ENCODE measurements at regions of chr15 and their contacts with region 1.

Region 1: GRCh38 chr15:78131295-78132061 is at the start of gene CIB2:
- DNase-seq: peak; percentile 88
- ATAC-seq: peak; percentile 96
- H3K4me3 Mint-ChIP-seq: peak within 1 kb of the TSS; percentile 84
- H3K27ac Mint-ChIP-seq: peak within 1 kb of the TSS; percentile 66
- H3K4me1 Mint-ChIP-seq: peaks cover 16% of the 10 kb centered on the region
- H3K27me3 Mint-ChIP-seq: no peaks in the 10 kb centered on the region
- CTCF ChIP-seq: no peak
- total RNA-seq, gene CIB2: 3.5 and 3.7 TPM in 2 replicates

Region 2: DNA sequence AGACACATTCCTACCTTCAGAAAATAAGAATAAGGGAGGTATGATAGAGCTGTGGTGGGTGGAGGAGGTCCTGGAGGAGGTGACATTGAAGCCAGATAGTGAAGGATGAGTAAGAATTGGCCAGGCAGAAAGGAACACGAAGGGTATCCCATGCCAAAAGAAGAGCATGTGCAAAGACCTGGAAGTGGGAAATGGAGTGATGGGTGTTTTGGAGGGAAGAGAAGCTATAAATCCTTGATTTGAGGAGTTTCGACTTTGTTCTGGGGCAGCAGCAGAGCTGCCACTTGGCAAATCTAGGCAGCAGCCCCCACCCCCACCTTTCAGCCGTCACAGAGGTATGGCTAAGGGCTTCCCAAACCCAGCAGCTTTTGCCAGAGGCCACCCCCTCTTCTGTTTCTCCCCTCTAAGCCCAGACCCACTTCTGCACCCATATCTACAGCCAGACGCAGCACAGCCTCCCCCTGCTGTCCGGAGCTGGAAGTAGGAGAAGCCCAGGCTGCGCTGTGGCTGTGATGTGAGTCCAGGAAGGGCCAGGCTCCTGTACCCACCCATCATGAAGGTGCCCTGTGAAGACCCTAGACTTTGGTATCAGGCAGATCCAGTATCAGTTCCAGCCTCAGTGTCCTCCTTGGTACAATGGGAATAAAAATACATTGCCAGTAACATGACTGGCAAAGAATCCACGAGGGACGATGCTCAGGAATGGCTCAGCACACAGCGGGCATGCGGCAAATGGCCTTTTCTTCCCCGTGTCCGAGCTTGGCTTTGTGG is 310.1 kb before region 1 on chr15:
- CTCF ChIA-PET with region 1: no interaction called
- POLR2A ChIA-PET with region 1: no interaction called
- intact Hi-C with region 1: no loop called
- DNase-seq: no peak
- ATAC-seq: no peak
- H3K4me3 Mint-ChIP-seq: no peak overlapping the region
- H3K27ac Mint-ChIP-seq: no peak overlapping the region
- H3K4me1 Mint-ChIP-seq: peaks cover 11% of the 10 kb centered on the region
- H3K27me3 Mint-ChIP-seq: peaks cover 53% of the 10 kb centered on the region
- CTCF ChIP-seq: no peak

Region 3: GRCh38 chr15:78101463-78102139 is 29.9 kb before region 1 on chr15:
- CTCF ChIA-PET with region 1: no interaction called
- POLR2A ChIA-PET with region 1: no interaction called
- intact Hi-C with region 1: no loop called
- DNase-seq: no peak
- ATAC-seq: no peak
- H3K4me3 Mint-ChIP-seq: no peak overlapping the region
- H3K27ac Mint-ChIP-seq: no peak overlapping the region
- H3K4me1 Mint-ChIP-seq: no peaks in the 10 kb centered on the region
- H3K27me3 Mint-ChIP-seq: no peaks in the 10 kb centered on the region
- CTCF ChIP-seq: no peak

Region 4: DNA sequence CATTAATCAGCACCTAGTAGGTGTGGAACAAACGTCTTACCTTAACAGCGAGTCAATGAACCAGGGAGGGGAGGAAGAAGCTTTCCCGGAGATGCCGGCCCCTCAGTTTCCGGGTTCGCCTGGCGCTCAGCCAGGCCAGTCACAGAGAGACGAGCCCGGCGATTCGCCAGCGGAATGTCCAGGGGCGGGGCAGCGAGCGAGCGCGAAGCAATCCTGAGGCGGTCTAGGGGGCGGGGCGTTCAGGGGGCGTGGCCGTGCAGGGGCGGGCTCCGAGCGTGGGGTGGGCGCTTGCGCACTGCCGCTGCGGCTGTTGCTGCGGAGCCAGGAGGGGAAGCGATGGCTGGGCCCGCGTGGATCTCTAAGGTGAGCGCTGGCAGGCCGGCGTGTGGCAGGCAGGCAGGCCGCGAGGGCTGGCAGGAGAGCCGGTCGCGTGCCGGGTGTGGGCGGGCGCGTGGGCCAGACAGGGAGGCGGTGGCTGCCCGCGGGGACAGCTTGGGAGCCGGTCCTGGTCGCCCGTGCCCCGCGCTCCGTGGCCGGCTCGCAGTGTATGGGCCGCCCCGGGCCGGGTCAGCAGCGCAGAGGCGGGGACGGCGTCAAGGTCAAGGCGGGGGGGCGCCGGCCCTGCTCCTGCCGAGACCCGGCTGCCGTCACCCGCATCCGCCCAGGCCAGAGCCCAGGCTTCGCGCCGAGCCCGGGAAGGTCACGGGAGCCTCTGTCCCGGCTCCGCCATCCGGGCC is 17.8 kb after region 1 on chr15 and contains the start of gene IDH3A:
- CTCF ChIA-PET with region 1: interaction called, 3 read pairs
- POLR2A ChIA-PET with region 1: interaction called, 22 read pairs
- intact Hi-C with region 1: loop called (anchors 1 kb)
- DNase-seq: peak; percentile 99
- ATAC-seq: peak; percentile 97
- H3K4me3 Mint-ChIP-seq: peak within 1 kb of the TSS; percentile 94
- H3K27ac Mint-ChIP-seq: peak within 1 kb of the TSS; percentile 91
- H3K4me1 Mint-ChIP-seq: peaks cover 46% of the 10 kb centered on the region
- H3K27me3 Mint-ChIP-seq: no peaks in the 10 kb centered on the region
- CTCF ChIP-seq: no peak
- total RNA-seq, gene IDH3A: 111 and 124 TPM in 2 replicates

Region 5: GRCh38 chr15:78170848-78171773 is 39.6 kb after region 1 on chr15:
- CTCF ChIA-PET with region 1: interaction called, 31 read pairs
- POLR2A ChIA-PET with region 1: interaction called, 6 read pairs
- intact Hi-C with region 1: loop called (anchors 2 kb)
- DNase-seq: no peak
- ATAC-seq: peak; percentile 73
- H3K4me3 Mint-ChIP-seq: peak overlapping the region; percentile 77
- H3K27ac Mint-ChIP-seq: peak overlapping the region; percentile 95
- H3K4me1 Mint-ChIP-seq: peaks cover 92% of the 10 kb centered on the region
- H3K27me3 Mint-ChIP-seq: no peaks in the 10 kb centered on the region
- CTCF ChIP-seq: no peak

Region 6: DNA sequence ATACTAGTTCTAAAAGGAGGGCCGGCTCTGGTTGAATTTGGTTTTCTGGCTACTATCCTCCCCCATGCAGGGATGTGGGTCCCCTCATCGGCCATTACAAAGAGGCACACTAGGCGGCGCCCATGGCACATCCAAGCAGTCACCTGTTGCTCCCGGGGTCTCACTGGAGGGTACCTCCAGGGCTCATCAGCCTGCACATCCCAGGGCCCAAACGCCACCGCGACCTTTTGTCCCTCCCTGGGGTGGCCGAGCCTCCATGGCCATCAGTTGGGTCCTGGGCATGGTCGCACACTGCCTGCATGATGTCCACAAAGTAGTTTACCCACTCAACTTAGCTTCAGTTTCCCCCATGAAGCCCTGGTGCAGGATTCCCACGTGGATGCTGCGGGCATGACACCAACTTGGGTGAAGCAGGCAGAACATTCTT is 46.0 kb after region 1 on chr15:
- CTCF ChIA-PET with region 1: interaction called, 31 read pairs
- POLR2A ChIA-PET with region 1: interaction called, 6 read pairs
- intact Hi-C with region 1: no loop called
- DNase-seq: no peak
- ATAC-seq: peak; percentile 40
- H3K4me3 Mint-ChIP-seq: no peak overlapping the region
- H3K27ac Mint-ChIP-seq: no peak overlapping the region
- H3K4me1 Mint-ChIP-seq: peaks cover 38% of the 10 kb centered on the region
- H3K27me3 Mint-ChIP-seq: no peaks in the 10 kb centered on the region
- CTCF ChIP-seq: no peak

Region 7: GRCh38 chr15:78241007-78241406 is 109.5 kb after region 1 on chr15:
- CTCF ChIA-PET with region 1: interaction called, 18 read pairs
- POLR2A ChIA-PET with region 1: no interaction called
- intact Hi-C with region 1: loop called (anchors 1 kb)
- DNase-seq: peak; percentile 77
- ATAC-seq: peak; percentile 94
- H3K4me3 Mint-ChIP-seq: no peak overlapping the region
- H3K27ac Mint-ChIP-seq: no peak overlapping the region
- H3K4me1 Mint-ChIP-seq: peaks cover 2% of the 10 kb centered on the region
- H3K27me3 Mint-ChIP-seq: no peaks in the 10 kb centered on the region
- CTCF ChIP-seq: no peak